HEK293T (cell line): ENCODE measurements at regions of chr2 and their contacts with region 1.

Region 1: GRCh38 chr2:96208143-96209010 is at the start of gene STARD7:
- DNase-seq: peak; percentile 96

Region 2: DNA sequence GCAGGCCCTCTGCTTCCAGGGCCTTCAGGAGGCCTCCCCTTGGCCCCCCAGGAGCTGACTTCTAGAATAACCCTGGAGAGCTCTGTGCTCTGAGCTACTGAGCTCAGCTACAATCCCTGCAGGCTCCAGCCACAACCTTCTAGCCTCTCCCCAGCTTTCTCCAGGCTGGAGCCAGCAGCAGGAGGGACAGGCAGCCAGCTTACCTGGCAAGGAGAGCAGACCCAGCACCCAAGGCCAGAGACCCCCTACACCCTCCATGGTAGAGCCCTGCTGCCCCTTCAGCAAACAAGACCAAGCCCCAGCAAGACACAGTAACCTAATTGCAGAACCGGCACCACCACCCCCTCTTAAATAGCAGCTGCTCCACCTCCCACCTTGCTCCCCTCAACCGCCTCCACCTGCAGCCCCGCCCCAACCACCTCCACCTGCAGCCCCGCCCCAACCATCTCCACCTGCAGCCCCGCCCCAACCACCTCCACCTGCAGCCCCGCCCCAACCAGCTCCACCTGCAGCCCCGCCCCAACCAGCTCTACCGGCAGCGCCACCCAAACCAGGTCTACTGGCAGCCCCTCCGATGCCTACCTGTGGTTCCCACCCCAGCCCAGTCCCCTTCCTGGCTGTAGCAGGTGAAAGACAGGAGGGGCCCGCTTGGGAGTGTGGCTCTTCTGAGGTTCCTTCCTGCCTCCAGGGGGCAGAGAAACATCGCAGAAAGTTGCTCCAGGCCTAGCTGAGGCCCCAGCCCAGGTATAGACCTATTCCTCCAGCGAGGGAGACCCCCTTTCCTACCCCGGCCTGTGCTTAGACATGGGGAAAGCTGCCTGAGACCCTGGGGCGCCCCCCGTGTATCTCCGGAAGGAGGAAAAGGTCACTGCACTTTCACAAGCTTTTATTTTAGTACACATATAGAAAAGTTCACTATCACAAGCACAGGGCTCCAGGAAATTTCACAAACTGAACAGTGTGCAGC is 69.9 kb before region 1 on chr2 and contains the start of gene ASTL:
- CTCF ChIA-PET with region 1: no interaction called
- POLR2A ChIA-PET with region 1: interaction called, 12 read pairs
- DNase-seq: peak; percentile 59

Region 3: DNA sequence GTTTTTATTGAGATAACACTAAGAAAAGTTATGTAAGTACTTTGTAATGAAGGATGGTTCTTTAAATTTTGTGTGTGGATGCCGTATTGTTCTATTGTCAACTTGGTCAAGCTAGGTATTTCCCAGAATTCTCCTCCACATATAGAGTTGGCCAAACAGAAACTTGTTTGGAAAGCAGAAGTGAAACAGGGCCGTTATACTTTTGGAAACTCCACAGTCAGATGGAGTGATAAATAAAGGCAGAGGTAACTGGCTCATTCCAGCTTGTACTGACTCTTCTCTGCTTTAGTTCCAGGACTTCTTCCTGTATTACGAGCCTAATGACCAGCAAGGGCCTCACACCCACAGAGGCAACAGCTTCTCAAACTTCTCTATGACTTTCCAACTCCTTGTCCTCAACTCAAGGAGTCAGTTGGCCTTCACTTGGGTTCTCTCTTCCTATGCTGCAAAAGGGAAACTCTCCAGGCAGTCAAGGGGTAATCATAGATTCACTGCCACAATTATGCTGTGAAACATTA is 16.7 kb after region 1 on chr2:
- CTCF ChIA-PET with region 1: interaction called, 4 read pairs
- POLR2A ChIA-PET with region 1: interaction called, 10 read pairs
- DNase-seq: no peak

Region 4: DNA sequence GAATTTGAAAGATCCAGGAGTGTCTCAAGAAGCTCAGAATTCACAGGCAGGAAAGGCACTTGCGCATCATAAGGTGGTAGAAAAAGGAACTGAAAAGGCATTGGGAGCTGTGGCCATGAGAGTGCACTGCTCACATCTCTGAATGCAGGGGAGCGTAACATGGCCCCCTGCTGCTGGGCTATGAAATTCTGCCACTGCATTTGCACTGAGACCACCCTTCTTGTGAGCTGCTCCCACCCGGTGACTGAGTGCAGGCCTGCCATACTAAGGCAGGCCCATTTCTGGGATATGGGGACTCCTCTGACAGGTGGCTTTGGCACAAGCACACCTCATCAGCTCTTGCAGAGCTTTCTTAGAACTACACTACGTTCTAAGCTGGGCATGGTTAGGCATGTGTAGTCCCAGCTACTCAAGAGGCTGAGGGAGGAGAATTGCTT is 25.5 kb after region 1 on chr2:
- CTCF ChIA-PET with region 1: no interaction called
- POLR2A ChIA-PET with region 1: interaction called, 15 read pairs
- DNase-seq: no peak

Region 5: DNA sequence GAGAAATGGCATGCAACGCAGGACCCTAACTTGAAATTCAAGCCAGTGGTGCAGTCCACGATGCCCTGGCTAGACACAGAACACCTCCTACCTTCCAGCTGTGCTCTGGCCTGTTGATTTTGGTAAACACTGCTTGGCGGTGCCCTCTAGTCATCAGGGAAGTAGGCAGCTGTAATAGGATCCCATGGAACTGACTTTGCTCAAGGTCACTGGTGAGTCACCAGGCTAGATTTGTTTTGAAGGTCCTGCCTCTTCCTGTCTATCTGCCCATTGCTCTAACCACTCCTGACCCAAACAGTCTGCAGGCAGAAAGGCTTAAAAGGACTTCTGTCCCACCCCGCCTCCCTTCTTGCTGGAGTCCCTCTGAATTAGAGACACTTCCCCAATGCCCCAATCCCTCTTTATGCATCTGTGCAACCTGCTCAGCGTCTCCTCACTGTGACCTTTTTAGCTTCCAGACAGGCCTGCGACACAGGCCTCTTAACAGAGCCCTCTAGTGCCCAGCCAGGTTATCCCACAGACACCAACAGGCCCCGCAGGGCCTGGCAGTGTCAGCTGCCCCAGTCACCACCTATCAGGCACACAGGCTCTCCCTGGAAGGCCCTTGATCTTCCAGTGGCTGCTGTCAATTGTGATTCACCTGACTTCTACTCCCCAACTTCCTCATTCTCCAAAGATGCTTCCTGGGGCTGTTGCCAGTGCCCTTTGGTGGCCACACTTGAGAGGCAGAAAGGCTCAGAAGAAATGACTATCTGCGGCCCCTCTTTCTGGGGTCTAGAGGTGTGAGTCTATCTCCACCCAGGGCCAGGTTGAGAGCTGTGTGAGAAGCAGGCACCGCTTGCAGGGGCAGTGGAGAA is 52.3 kb after region 1 on chr2:
- CTCF ChIA-PET with region 1: interaction called, 3 read pairs
- POLR2A ChIA-PET with region 1: interaction called, 37 read pairs
- DNase-seq: peak; percentile 52

Region 6: DNA sequence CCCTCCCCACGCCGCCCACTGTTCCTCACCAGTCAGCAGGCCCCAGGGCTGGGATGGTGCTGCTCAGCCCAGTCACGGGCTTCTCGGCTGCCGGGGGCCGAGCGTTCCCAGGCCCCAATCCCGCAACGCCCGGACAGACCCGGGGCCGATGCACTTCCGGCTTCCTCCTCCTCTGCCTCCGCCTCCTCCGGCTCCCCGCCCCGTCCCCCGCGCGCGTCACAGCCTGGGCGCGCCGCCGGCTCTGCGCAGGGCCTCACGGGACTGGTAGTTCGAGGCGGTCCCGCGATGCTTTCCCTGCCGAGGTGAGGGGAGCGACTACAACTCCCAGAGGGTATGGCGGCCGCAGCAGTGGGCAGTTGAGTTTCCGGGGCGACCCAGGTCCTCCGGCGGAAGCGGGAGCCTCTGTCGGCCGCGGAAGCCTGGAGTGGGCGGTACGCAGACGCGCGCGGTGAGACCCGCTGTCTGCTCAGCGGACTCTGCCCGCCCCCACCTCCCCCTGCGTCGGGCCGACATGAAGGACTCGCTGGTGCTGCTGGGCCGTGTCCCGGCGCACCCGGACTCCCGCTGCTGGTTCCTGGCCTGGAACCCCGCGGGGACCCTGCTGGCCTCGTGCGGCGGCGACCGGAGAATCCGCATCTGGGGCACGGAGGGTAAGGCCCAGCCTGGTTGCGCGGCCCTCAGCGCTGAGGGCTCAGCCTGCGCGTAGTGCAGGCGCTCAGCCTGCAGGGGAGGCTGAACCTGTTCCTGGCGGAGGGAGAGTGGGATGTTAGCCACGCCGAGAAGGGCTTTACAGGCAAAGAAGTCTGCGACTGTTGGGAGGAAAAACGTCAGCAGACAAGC is 57.7 kb after region 1 on chr2 and contains the starts of genes CIAO1 and TMEM127:
- CTCF ChIA-PET with region 1: no interaction called
- POLR2A ChIA-PET with region 1: interaction called, 37 read pairs
- DNase-seq: peak; percentile 97